Left cardiac atrium (tissue), 4 donors: ENCODE measurements at regions of chr11 and their contacts with region 1.

Region 1: GRCh38 chr11:114180301-114181055 is 115.7 kb upstream of the NNMT start:
- DNase-seq: no peak
- ATAC-seq: peak; percentile 65

Region 2: DNA sequence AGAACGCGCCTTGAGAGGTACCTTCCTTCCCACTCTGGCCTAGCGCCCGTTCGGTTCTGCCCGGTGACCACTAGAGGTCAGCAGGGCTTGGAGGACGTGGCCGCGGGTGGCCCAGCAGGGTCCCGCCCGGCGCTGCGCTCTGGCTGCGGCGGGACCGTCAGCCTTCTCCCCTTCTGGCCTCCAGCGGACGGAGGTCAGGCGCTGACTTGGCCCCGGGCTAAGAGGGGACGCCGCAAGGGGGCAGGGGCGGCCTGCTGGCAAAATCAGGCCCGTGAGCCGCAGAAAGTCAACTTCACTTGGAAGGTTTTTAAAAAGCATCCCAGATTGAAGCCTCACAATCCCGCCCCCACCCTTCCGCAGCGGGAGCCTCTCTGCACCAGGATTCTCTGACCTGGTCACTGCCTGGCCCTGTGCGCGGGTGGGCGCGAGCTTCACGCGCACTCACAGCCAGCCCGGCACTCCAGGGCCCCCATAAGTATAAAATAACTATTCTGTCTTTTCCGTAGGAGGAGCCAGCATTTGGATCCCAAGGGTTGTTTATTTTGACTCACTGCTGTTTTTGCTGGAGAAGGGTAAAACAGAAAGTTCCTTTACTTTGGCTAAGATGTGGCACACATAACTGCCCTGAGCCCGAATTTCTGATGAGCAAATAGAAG is 144.2 kb before region 1 on chr11:
- intact Hi-C with region 1: loop called in 1 of 2 experiments (anchors 2 kb)
- DNase-seq: peak; percentile 90
- ATAC-seq: peak; percentile 95

Region 3: GRCh38 chr11:114059278-114059983 is 121.0 kb before region 1 on chr11 and contains the start of gene ZBTB16:
- intact Hi-C with region 1: loop called (anchors 5 kb)
- DNase-seq: peak; percentile 91
- ATAC-seq: peak; percentile 78 to 80
- total RNA-seq, gene ZBTB16: 65.2 to 79.5 TPM

Region 4: DNA sequence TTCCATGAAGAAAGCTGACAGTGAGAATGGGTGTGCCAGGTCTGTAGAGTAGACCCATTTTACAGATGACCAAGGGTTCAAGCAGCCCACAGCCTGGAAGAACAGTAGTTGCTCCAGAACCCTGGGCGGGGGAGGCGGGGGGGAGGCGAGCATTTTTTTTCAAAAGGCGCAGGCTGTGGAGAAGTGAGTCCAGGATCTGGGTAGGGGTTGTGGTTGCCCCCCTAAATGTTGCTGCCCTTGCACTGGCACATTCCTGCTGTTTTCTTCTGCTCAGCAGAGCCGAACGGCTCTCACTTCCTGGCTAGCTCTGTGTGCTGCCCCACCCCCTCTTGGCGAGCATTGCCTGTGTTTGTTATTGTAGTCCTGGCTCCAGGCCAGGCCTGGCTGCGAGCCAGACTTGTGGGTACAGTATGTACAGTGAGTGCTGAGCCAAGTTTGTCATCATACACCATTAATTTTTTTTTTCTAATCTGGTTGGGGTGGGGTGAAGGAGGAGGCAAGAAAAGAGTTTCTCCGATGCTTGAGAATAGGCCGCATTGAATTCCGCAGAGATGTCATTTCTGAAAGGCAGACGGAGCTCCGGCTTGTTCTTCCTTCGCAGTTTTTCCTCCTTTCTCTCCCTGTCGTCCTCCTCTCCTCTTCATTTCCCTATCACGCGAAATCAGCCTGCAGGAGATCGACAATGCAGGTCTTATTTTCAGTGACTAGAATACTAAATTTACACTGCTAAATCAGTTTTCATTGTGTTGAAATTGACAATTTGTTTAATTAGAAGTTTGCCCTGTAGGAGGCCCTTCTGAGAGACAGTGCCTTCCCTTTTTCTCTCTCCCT is 20.5 kb before region 1 on chr11:
- intact Hi-C with region 1: loop called in 1 of 2 experiments (anchors 2 kb)
- DNase-seq: peak; percentile 99
- ATAC-seq: peak; percentile 79 to 84

Region 5: DNA sequence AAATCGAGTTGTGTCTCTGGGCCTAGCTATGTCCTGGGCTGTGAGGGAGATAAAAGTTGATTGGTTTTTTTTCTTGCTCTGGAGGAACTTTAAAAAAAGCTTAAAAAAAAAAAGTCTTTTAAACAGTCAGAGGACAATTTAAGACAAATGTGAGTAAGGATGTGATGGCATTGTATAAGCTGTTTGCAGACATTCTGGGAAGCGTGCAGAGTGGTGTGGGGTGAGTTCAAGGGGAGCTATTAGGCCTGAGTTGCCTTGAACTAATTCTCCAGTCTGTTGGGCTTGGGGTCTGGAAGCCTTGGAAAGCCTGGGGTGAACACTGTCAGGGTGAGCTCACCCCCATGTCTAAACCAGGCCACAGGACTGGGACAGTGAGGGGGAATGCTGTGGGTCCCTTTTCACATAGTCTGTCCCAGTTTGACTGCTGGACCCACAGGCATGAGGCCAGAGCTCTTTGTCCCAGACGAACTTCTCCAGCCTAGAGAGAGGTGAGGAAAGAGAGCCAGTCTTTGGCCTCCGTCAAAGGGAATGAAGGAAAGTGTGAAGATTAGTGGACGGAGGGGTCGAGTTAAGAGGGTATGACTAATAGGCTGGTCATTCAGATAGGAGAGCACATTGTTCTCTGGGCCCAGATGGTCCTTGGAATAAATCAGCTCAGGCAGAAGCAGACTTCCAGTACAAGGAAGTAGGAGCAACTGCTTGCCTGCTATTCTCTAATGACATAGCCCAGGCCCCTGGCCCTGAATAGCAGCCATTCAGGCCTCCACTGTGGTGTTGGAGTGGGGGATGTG is 39.3 kb after region 1 on chr11:
- intact Hi-C with region 1: no loop called
- DNase-seq: peak; percentile 59
- ATAC-seq: peak; percentile 54 to 91

Region 6: DNA sequence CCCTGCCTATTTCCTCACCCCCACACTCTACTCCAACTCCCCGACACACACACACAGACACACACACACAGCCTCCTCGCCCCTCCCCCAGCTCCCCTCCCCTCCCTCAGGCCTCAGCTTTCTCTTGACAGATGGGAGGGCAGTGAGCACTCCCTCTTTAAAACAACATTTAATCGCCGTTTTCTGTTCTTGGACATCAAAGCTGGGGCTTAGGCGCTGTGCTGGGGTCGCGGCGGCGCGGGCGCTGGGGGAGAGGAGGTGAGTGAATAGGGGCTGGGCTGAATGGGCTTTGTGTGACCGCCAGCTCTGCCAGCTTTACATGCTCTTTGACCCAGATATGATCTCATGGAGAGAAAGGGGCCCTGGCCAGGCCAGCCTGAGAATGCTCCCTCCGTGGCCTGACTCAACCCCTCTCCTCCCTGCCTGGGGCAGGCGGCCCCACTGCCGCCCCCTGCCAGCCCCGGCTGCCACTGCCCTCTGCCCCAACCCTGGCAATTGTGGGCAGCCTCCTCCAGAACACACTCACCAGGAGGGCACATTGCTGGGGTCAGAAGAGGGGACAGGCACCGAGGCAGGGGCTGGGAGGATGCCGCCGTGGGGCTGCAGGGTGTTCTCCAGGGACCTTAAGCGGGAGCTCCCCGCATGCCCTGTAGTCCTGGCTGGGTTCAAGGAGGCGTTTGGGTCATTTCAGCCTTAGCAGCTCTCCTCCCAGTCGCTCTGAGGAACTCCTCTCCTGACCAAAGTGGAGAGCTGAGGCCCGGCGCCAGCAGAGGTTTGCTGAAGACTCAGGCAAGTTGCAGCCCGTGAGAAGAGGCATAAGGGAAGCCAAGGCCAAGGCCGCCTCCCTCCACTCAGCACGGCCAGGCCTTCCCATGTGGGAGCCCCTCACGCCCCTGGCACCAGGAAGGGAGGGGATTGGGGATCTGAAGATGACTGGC is 77.4 kb after region 1 on chr11:
- intact Hi-C with region 1: loop called (anchors 5 to 10 kb)
- DNase-seq: peak; percentile 58
- ATAC-seq: peak; percentile 64 to 68

Region 7: GRCh38 chr11:114295676-114296604 is 115.5 kb after region 1 on chr11 and contains the start of gene NNMT:
- intact Hi-C with region 1: no loop called
- DNase-seq: peak; percentile 84
- ATAC-seq: peak; percentile 81 to 87
- total RNA-seq, gene NNMT: 119 to 298 TPM